ENCODE measurements at regions of chr20 and their contacts with region 1.

Region 1: GRCh38 chr20:34069341-34070078 is 42.5 kb downstream of the EIF2S2 start:
- DNase-seq: peak in 1 of 2 donors; percentile 84
- H3K4me3 ChIP-seq: no peak overlapping the region
- H3K27ac ChIP-seq: no peak overlapping the region
- H3K4me1 ChIP-seq: peaks cover 6 to 11% of the 10 kb centered on the region in 2 donors
- H3K27me3 ChIP-seq: no peaks in the 10 kb centered on the region
- CTCF ChIP-seq: peak; percentile 83 to 89 (median 84)

Region 2: DNA sequence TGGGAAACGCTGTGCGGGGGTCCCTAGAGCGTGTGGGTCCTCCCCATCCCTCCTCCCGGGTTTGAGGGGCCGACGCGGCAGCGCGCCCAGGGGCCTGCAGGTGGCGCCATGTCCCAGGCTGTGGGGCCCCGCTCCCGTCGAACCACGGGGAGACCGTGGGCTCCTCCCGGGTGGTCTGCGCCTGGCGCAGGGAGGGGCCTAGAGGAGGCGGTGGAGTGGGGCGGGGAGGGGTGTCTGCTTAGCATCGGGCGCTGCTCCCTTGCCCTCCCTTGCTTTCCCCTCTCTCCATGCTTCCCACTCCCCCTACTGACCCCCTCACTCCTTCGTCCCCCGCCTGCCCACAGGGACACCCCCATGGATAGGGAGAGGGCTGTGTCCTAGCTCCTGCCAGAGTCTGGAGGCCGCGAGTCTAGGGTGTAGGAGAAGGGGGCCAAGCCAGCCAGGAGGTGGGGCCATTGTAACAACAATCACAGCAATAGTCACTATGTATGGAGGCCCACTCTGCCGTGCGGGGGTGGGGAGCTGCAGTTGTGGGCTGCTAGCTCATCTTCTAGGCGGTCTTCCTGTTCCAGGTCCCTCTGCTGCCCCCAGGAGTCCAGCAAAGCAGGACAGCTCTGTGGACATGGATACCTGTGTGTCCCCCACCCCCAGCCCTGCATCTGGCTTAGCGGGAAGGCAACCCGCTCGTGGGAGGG is 206.7 kb before region 1 on chr20:
- intact Hi-C with region 1: loop called (anchors 1 kb)
- DNase-seq: peak in 1 of 2 donors; percentile 68
- H3K4me3 ChIP-seq: peak overlapping the region in 1 of 2 donors; percentile 20
- H3K27ac ChIP-seq: no peak overlapping the region
- H3K4me1 ChIP-seq: peaks cover 4 to 5% of the 10 kb centered on the region in 2 donors
- H3K27me3 ChIP-seq: no peaks in the 10 kb centered on the region
- CTCF ChIP-seq: peak; percentile 60 to 81 (median 62)

Region 3: GRCh38 chr20:33933469-33933909 is 136.0 kb before region 1 on chr20:
- intact Hi-C with region 1: loop called (anchors 1 kb)
- DNase-seq: peak; percentile 26 to 78
- H3K4me3 ChIP-seq: no peak overlapping the region
- H3K27ac ChIP-seq: peak overlapping the region; percentile 56 to 65
- H3K4me1 ChIP-seq: no peaks in the 10 kb centered on the region
- H3K27me3 ChIP-seq: no peaks in the 10 kb centered on the region
- CTCF ChIP-seq: peak; percentile 54 to 67 (median 66)

Region 4: GRCh38 chr20:34129518-34130162 is 60.1 kb after region 1 on chr20:
- intact Hi-C with region 1: loop called (anchors 1 kb)
- DNase-seq: peak in 1 of 2 donors; percentile 74
- H3K4me3 ChIP-seq: peak overlapping the region in 1 of 2 donors; percentile 43
- H3K27ac ChIP-seq: no peak overlapping the region
- H3K4me1 ChIP-seq: peaks cover 0 to 4% of the 10 kb centered on the region in 2 donors
- H3K27me3 ChIP-seq: no peaks in the 10 kb centered on the region
- CTCF ChIP-seq: peak; percentile 70 to 82 (median 82)

Region 5: DNA sequence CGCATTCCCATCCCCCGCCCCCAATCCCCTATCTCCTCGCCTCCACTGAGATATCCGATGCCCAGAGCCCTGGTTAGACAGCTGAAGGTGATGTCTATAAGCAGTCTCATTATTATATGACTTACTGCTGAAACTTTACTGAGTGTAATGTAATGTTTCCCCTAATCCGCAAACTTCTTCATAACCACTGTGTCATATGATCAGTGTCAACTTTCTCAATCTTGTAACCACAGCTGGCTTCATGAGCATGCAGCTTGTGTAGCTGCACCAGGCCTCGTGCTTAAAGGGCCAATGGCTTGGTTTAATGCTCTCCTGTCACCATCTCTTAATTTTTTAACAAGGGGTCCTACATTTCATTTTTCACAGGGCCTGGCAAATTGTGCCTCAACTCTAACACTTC is 179.8 kb after region 1 on chr20:
- intact Hi-C with region 1: no loop called
- DNase-seq: no peak
- H3K4me3 ChIP-seq: no peak overlapping the region
- H3K27ac ChIP-seq: no peak overlapping the region
- H3K4me1 ChIP-seq: no peaks in the 10 kb centered on the region
- H3K27me3 ChIP-seq: no peaks in the 10 kb centered on the region
- CTCF ChIP-seq: no peak